ENCODE measurements at regions of chr7 and their contacts with region 1.

Region 1: DNA sequence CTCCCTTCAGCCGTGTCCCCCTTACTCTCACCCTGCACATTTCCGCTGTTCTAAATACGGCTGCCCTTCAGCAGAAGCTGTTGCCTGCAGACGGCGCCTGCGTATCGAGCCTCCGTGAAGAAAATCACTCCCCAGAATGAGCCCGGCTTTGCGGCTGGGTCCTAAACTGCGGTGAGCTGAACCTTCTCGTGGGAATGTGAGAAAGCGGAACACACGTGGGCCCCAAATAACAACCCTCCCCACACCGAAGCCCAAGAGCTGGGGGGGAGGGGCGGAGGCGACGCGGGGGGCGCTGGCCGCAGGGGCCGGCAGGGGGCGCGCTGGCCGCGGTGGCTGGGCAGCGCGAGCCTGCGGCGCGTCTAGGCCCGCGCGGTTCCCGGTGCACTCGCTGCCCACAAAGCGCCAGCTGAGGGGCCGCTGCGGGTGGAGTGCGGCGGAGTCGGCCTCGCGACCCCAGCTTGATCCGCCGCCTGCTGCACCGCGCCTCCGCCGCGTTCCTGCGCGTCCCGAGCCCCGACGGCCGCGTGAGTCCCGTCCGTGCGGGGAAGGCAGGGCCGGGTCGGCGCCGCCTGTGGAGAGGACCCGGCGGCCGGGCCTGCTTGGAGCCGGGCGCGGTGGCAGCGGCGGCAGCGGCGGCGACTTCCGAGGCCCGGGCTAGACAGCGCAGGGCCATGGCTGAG is at the start of gene ZNF398:
- DNase-seq: peak; percentile 77 to 91 (median 85)
- ATAC-seq: peak; percentile 92
- H3K4me3 ChIP-seq: peak within 1 kb of the TSS; percentile 98
- H3K4me3 Mint-ChIP-seq: peak within 1 kb of the TSS; percentile 88 to 98 (median 93)
- H3K27ac ChIP-seq: peak within 1 kb of the TSS; percentile 86
- H3K27ac Mint-ChIP-seq: peak within 1 kb of the TSS; percentile 90 to 98 (median 95)
- H3K4me1 ChIP-seq: peaks cover 8 to 23% of the 10 kb centered on the region in 2 donors
- H3K4me1 Mint-ChIP-seq: peaks cover 24 to 52% (median 42%) of the 10 kb centered on the region in 7 donors
- H3K27me3 ChIP-seq: no peaks in the 10 kb centered on the region
- H3K27me3 Mint-ChIP-seq: no peaks in the 10 kb centered on the region
- total RNA-seq, gene ZNF398: 14.6 to 27.9 (median 16.9) TPM

Region 2: DNA sequence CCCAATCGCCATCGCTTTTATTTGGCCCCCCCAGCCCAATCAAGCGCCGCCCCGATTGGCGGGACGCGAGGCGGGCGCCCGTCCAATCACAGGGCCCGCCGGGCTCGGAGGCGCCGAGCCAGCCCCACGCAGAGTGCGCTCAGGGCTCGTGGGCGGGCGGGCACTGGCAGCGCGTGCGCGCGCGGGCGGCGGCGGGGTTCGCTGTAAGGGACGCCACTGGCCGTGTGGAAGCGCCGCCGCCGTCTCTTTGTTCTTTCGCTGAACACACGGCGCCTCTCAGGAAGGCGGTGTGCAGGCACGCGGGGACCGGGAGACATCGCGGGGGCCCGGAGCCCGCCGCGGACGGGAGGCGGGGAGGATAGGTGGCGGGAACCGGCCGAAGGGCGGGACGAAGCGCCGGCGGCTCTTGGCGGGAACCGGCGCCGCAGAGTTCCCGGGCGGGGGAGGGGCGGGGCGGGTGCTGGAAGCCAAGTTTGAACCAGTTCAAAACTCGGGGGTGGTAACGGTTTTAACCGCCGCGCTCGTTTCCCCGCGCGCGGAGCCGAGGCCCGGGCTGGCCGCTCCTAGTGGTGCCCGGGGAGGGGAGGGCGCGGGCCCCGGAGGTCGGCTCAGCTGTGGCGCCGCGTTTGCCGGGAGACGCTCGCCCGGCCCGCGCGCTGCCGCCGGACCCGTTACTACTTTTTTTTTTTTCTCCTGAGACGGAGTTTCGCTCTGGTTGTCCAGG is 262.8 kb before region 1 on chr7:
- CTCF ChIA-PET with region 1: no interaction called
- POLR2A ChIA-PET with region 1: no interaction called
- intact Hi-C with region 1: loop called in 1 of 2 experiments (anchors 5 kb)
- DNase-seq: peak; percentile 89 to 96 (median 94)
- ATAC-seq: peak; percentile 94
- H3K4me3 ChIP-seq: peak overlapping the region; percentile 57
- H3K4me3 Mint-ChIP-seq: peak overlapping the region; percentile 85 to 98 (median 94)
- H3K27ac ChIP-seq: peak overlapping the region; percentile 97
- H3K27ac Mint-ChIP-seq: peak overlapping the region; percentile 89 to 98 (median 93)
- H3K4me1 ChIP-seq: peaks cover 6 to 7% of the 10 kb centered on the region in 2 donors
- H3K4me1 Mint-ChIP-seq: peaks cover 0 to 45% (median 29%) of the 10 kb centered on the region in 7 donors
- H3K27me3 ChIP-seq: no peaks in the 10 kb centered on the region
- H3K27me3 Mint-ChIP-seq: no peaks in the 10 kb centered on the region

Region 3: GRCh38 chr7:149013876-149014275 is 133.3 kb before region 1 on chr7:
- CTCF ChIA-PET with region 1: no interaction called
- POLR2A ChIA-PET with region 1: no interaction called
- intact Hi-C with region 1: no loop called
- DNase-seq: no peak
- ATAC-seq: no peak
- H3K4me3 ChIP-seq: no peak overlapping the region
- H3K4me3 Mint-ChIP-seq: no peak overlapping the region
- H3K27ac ChIP-seq: no peak overlapping the region
- H3K27ac Mint-ChIP-seq: peak overlapping the region in 6 of 9 donors; percentile 21 to 89 (median 53)
- H3K4me1 ChIP-seq: no peaks in the 10 kb centered on the region
- H3K4me1 Mint-ChIP-seq: peaks cover 0 to 22% (median 9%) of the 10 kb centered on the region in 7 donors
- H3K27me3 ChIP-seq: no peaks in the 10 kb centered on the region
- H3K27me3 Mint-ChIP-seq: no peaks in the 10 kb centered on the region

Region 4: DNA sequence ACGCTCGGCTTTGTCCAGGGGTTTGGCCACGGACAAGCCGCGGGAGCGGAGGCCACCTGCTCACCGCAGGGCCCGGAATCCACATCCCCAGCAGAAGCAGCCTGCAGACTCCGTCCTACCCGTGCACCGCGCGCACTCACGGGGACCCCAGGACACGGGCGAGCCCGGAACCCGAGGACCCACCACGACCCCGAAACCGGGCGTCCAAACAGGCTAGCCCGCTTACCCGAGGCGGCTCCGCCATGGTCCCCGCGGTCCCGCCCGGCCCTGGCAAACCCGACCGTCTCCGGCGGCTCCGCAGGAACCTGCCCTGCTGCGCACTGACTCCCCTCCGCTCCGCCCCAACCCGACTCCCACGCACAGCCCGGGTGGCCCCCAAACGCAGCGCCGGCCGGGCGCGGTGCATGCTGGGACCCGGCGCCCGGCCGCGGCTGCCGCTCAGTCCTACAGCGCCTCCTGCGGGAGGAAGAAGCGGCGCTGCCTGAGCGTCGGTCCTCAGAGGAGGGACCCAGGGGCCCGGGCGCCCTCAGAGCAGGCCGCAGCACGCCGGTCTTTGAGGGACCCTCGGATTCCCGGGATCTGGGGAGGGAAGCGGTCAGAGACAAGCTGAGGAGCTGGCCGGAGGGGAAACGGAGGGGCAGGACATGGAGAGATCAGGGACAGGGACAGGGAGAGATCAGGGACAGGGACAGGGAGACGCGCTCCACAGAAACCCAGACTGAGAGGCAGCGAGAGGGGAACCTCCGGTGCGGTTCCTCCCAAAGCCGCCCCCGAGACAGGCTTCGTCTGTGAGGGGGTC is 56.6 kb before region 1 on chr7 and contains the start of gene ZNF786:
- CTCF ChIA-PET with region 1: no interaction called
- POLR2A ChIA-PET with region 1: interaction called, 11 read pairs
- intact Hi-C with region 1: loop called (anchors 1 to 5 kb)
- DNase-seq: peak; percentile 87 to 97 (median 92)
- ATAC-seq: peak; percentile 95
- H3K4me3 ChIP-seq: peak within 1 kb of the TSS; percentile 93
- H3K4me3 Mint-ChIP-seq: peak within 1 kb of the TSS; percentile 91 to 100 (median 99)
- H3K27ac ChIP-seq: peak within 1 kb of the TSS; percentile 85
- H3K27ac Mint-ChIP-seq: peak within 1 kb of the TSS; percentile 93 to 100 (median 99)
- H3K4me1 ChIP-seq: peaks cover 8 to 9% of the 10 kb centered on the region in 2 donors
- H3K4me1 Mint-ChIP-seq: peaks cover 18 to 40% (median 35%) of the 10 kb centered on the region in 7 donors
- H3K27me3 ChIP-seq: no peaks in the 10 kb centered on the region
- H3K27me3 Mint-ChIP-seq: no peaks in the 10 kb centered on the region
- total RNA-seq, gene ZNF786: 5.4 to 22.0 (median 10.0) TPM

Region 5: DNA sequence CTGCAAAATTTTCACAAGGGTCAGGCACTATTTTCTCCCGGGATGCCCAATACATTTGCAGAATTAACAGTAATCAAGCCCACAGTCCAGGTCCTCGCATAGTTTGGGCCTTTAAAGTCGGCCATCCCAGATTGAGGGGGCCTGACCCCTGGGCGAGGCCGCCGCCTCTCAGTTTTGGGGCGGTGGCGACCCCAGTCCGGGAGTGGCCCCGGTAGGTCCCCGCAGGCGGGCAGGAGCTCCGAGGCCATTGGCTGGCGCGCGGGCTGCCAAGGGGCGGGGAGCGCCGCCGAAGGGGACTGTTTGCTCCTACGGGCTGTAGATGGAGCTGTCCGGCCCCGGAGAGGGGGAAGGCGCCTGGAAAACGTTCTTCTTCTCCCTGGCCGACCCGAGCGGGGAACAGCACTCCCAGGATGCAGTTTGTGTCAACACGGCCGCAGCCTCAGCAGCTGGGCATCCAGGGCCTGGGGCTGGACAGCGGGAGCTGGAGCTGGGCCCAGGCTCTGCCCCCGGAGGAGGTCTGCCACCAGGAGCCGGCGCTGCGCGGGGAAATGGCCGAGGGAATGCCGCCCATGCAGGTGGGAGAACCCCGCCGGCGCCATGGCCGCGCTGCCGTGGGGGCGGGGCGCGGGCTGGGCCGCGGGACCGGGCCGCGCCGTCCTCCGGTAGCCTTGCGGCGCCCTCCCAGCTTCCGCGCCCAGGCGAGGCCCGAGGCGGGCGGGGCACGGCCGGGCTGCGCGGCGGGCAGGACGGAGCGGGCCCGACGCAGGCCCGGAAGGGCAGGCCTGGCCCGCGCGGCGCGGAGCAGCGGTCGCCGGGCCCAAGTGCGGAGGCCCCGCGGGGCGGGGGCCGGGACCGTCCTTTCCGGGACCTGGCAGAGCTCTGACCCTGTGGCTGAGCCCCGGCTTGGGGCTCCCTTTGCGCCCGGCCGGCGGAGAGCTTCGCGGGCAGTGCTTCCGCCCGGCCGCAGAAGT is 48.3 kb after region 1 on chr7 and contains the start of gene ZNF282:
- CTCF ChIA-PET with region 1: interaction called, 3 read pairs
- POLR2A ChIA-PET with region 1: interaction called, 12 read pairs
- intact Hi-C with region 1: loop called (anchors 1 to 2 kb)
- DNase-seq: peak; percentile 43 to 84 (median 56)
- ATAC-seq: peak; percentile 91
- H3K4me3 ChIP-seq: peak within 1 kb of the TSS; percentile 82
- H3K4me3 Mint-ChIP-seq: peak within 1 kb of the TSS; percentile 83 to 94 (median 90)
- H3K27ac ChIP-seq: peak within 1 kb of the TSS; percentile 77
- H3K27ac Mint-ChIP-seq: peak within 1 kb of the TSS; percentile 79 to 97 (median 86)
- H3K4me1 ChIP-seq: peaks cover 6 to 8% of the 10 kb centered on the region in 2 donors
- H3K4me1 Mint-ChIP-seq: peaks cover 20 to 52% (median 47%) of the 10 kb centered on the region in 7 donors
- H3K27me3 ChIP-seq: no peaks in the 10 kb centered on the region
- H3K27me3 Mint-ChIP-seq: peaks cover 0 to 3% (median 0%) of the 10 kb centered on the region in 5 donors
- total RNA-seq, gene ZNF282: 12.1 to 36.7 (median 15.1) TPM

Region 6: DNA sequence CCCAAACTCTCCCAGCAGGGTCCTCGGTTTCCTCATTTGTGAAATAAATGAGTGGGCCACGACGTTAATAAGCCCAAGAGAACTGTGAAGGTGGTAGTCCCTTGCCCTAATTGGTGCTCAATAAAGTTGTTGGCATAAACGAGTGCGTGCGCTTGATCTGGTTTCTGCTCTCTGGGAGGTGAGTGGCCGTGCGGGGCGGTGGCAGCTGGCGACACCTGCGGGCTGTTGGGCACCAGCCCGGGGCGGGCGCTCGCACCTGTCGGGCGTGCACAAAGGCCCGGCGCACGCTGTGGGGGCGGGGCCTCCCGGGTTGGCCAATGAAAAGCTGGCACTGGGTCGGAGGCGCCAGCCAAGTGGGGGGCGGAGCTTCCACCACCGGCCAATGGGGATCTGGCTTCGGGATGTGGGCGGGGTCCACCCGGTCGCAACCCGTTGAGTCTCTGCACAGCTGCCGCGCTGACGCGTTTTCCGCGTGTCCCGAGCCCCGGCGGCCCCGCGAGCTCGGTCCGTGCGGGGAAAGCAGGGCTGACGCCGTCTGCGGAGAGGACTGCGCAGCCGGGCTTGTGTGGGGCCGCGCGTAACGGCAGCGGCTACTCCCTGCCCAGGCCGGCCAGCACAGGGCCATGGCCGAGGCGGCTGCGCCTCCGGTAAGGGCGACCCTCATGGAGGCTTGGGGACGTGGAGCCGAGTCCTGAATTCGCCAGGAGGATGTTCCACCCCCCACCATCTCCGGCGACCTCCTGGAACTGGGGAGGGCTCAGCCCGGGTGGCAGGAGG is 137.8 kb after region 1 on chr7:
- CTCF ChIA-PET with region 1: no interaction called
- POLR2A ChIA-PET with region 1: interaction called, 5 read pairs
- intact Hi-C with region 1: loop called in 1 of 2 experiments (anchors 1 kb)
- DNase-seq: peak; percentile 96 to 99 (median 98)
- ATAC-seq: peak; percentile 98
- H3K4me3 ChIP-seq: peak overlapping the region; percentile 80
- H3K4me3 Mint-ChIP-seq: peak overlapping the region; percentile 79 to 97 (median 92)
- H3K27ac ChIP-seq: peak overlapping the region; percentile 72
- H3K27ac Mint-ChIP-seq: peak overlapping the region; percentile 76 to 96 (median 93)
- H3K4me1 ChIP-seq: peaks cover 30 to 36% of the 10 kb centered on the region in 2 donors
- H3K4me1 Mint-ChIP-seq: peaks cover 26 to 55% (median 46%) of the 10 kb centered on the region in 7 donors
- H3K27me3 ChIP-seq: no peaks in the 10 kb centered on the region
- H3K27me3 Mint-ChIP-seq: no peaks in the 10 kb centered on the region

Region 7: GRCh38 chr7:149381245-149381644 is 234.0 kb after region 1 on chr7:
- CTCF ChIA-PET with region 1: no interaction called
- POLR2A ChIA-PET with region 1: no interaction called
- intact Hi-C with region 1: no loop called
- DNase-seq: no peak
- ATAC-seq: no peak
- H3K4me3 ChIP-seq: no peak overlapping the region
- H3K4me3 Mint-ChIP-seq: no peak overlapping the region
- H3K27ac ChIP-seq: no peak overlapping the region
- H3K27ac Mint-ChIP-seq: no peak overlapping the region
- H3K4me1 ChIP-seq: no peaks in the 10 kb centered on the region
- H3K4me1 Mint-ChIP-seq: no peaks in the 10 kb centered on the region
- H3K27me3 ChIP-seq: no peaks in the 10 kb centered on the region
- H3K27me3 Mint-ChIP-seq: peaks cover 1 to 20% (median 11%) of the 10 kb centered on the region in 5 donors

Region 8: DNA sequence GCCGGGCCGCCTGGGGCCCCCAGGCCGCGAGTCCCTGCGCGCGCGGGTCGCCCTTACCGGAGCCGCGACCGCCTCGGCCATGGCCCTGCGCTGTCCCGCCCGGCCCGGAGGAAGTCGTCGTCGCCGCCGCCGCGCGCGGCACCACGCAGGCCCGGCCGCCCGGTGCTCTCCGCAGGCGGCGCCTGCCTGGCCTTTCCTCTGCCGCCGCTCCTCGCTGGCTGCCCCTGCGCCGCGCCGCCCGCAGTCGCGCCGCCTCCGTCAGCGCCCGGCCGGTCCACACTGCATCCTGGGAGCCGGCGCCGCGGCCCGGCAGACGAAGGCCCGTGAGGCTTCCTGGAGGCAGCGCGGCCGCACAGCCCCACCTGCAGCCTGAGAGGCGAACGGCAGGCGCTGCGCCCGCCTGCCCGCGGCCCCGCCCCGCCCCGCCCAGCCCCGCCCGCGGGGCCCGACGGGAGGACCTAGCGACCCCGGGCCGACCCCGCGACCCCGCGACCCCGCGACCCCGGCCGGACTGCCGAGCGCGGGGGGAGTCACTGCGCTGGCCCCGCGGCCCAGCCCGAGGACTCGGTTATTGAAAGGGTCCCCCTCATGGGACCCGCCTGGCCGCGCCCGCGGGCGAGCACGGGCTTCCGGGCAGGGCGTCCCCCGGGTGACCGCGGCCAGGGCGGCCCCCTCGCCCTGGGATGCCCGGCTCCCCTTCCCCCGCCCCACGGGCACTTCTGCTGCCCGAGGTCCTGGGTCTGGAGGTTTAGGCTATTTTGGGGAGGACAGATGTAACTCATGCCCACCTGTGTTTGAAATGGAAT is 350.4 kb after region 1 on chr7 and contains the start of gene ZNF746:
- CTCF ChIA-PET with region 1: no interaction called
- POLR2A ChIA-PET with region 1: no interaction called
- intact Hi-C with region 1: loop called (anchors 1 to 5 kb)
- DNase-seq: peak; percentile 57 to 85 (median 76)
- ATAC-seq: peak; percentile 96
- H3K4me3 ChIP-seq: peak within 1 kb of the TSS; percentile 67
- H3K4me3 Mint-ChIP-seq: peak within 1 kb of the TSS; percentile 92 to 99 (median 96)
- H3K27ac ChIP-seq: peak within 1 kb of the TSS; percentile 82
- H3K27ac Mint-ChIP-seq: peak within 1 kb of the TSS; percentile 84 to 97 (median 95)
- H3K4me1 ChIP-seq: peaks cover 19 to 27% of the 10 kb centered on the region in 2 donors
- H3K4me1 Mint-ChIP-seq: peaks cover 21 to 46% (median 30%) of the 10 kb centered on the region in 7 donors
- H3K27me3 ChIP-seq: no peaks in the 10 kb centered on the region
- H3K27me3 Mint-ChIP-seq: peaks cover 0 to 3% (median 0%) of the 10 kb centered on the region in 5 donors
- total RNA-seq, gene ZNF746: 23.6 to 32.0 (median 24.4) TPM

Region 9: DNA sequence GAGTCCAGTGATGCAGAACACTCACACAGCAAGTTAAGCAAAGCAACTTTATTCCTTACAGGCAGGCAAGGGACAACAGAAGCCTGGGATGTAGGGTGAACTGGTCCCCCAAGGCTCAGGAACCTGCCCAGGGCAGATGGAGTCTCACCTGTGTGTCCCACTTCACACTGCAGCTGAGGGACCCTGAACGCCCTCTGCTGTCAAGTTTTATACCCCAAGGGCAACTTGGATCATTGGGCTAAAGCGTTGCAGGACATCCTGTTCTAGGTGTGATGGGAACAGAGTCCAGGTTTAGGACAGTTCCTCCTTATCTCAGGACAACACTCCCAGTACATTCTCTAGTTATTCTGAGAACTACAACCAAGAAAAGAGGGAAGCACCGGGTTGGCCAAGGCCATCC is 399.9 kb after region 1 on chr7:
- CTCF ChIA-PET with region 1: no interaction called
- POLR2A ChIA-PET with region 1: no interaction called
- intact Hi-C with region 1: no loop called
- DNase-seq: no peak
- ATAC-seq: no peak
- H3K4me3 ChIP-seq: no peak overlapping the region
- H3K4me3 Mint-ChIP-seq: no peak overlapping the region
- H3K27ac ChIP-seq: no peak overlapping the region
- H3K27ac Mint-ChIP-seq: no peak overlapping the region
- H3K4me1 ChIP-seq: no peaks in the 10 kb centered on the region
- H3K4me1 Mint-ChIP-seq: peaks cover 0 to 1% (median 0%) of the 10 kb centered on the region in 7 donors
- H3K27me3 ChIP-seq: no peaks in the 10 kb centered on the region
- H3K27me3 Mint-ChIP-seq: no peaks in the 10 kb centered on the region

Region 10: DNA sequence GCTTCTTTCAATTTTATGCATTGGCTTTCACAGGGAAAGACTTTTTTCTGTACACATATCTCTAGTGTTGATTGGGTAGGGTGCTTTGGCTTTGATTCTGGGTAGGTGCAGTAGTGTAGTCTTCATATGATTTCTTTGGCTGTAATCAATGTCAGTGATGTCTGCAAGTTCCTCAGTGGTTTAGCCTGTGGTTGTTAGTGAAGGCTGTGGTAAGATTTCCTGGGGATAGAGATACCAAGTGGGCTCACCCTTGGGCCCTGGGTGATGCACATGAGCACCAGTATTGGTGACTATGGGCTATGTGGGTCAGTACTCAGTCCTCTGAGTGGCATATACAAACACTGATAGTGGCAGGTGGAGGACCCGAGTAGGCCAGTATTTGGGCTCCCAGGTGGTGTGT is 1316.2 kb after region 1 on chr7:
- CTCF ChIA-PET with region 1: no interaction called
- POLR2A ChIA-PET with region 1: no interaction called
- intact Hi-C with region 1: no loop called
- DNase-seq: no peak
- ATAC-seq: peak; percentile 8
- H3K4me3 ChIP-seq: peak overlapping the region; percentile 25
- H3K4me3 Mint-ChIP-seq: peak overlapping the region; percentile 39 to 91 (median 62)
- H3K27ac ChIP-seq: peak overlapping the region; percentile 12
- H3K27ac Mint-ChIP-seq: peak overlapping the region in 8 of 9 donors; percentile 44 to 97 (median 70)
- H3K4me1 ChIP-seq: peaks cover 41 to 43% of the 10 kb centered on the region in 2 donors
- H3K4me1 Mint-ChIP-seq: peaks cover 52 to 95% (median 90%) of the 10 kb centered on the region in 7 donors
- H3K27me3 ChIP-seq: no peaks in the 10 kb centered on the region
- H3K27me3 Mint-ChIP-seq: no peaks in the 10 kb centered on the region